Body of pancreas (tissue), 4 donors: ENCODE measurements at regions of chr1 and their contacts with region 1.

Region 1: DNA sequence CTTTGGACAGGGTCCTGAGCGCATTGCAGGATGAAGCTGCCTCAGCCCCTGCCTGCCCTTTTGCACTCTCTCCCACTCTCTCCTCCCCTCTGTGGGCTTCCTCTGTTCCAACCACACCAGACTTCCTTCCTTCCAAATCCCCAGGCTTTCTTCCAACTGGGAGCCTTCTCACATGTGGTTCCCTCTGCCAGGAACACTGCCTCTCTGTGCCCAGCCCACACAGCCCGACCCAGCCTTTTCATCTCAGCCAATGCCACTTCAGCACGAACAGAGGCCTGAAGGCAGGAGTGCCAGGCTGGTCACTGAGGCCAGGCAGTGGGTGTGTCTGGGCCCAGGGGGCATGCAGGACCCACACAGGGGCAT is 5.9 kb downstream of the SELENON start:
- DNase-seq: peak; percentile 66 to 82 (median 76)
- ATAC-seq: peak; percentile 78
- H3K4me3 ChIP-seq: no peak overlapping the region
- H3K27ac ChIP-seq: peak overlapping the region; percentile 71 to 83 (median 79)
- H3K4me1 ChIP-seq: peaks cover 75% of the 10 kb centered on the region
- H3K27me3 ChIP-seq: no peaks in the 10 kb centered on the region
- CTCF ChIP-seq: no peak
- POLR2A ChIP-seq: no peak

Region 2: DNA sequence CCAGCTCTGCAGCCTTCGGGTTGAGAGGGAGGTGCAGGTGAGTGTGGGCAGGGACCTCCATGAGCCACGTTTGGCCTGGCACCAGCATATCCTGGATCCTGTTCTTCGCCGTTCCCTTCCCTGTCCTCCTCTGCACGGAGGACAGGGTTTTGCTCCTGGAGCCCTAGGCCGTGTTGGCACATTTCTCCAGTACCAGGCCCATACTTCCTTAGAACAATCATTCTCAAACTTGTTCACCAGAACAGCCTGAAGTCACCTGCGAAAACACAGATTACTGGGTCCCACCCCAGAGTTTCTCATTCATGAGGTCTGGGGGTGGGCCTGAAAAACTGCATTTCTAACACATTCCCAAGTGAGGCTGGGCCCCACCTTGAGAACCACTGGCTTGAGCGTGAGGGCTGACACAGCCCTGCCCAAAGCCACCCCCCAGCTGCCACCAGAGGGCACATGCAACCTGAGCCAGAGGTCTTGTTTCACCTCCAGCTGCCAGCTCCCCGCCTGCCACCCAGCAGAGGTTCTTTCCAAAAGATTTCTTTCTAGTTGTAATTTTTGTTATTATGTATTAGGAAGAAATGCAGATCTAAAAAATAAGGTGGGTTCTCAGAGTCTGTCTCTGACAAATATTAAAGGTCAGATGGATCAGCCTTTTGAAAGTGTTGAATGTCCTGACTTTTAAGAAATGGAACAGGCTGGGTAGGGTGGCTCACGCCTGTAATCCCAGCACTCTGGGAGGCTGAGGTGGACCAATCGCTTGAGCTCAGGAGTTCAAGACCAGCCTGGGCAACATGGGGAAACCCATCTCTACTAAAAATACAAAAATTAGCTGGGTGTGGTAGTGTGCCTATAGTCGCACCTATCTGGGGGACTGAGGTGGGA is 302.1 kb before region 1 on chr1:
- intact Hi-C with region 1: loop called (anchors 5 kb)
- DNase-seq: peak; percentile 69 to 82 (median 75)
- ATAC-seq: peak; percentile 88
- H3K4me3 ChIP-seq: no peak overlapping the region
- H3K27ac ChIP-seq: no peak overlapping the region
- H3K4me1 ChIP-seq: no peaks in the 10 kb centered on the region
- H3K27me3 ChIP-seq: no peaks in the 10 kb centered on the region
- CTCF ChIP-seq: peak; percentile 28 to 72 (median 63)
- POLR2A ChIP-seq: no peak

Region 3: GRCh38 chr1:25610822-25611630 is 194.8 kb before region 1 on chr1:
- intact Hi-C with region 1: loop called (anchors 5 kb)
- DNase-seq: no peak
- ATAC-seq: no peak
- H3K4me3 ChIP-seq: no peak overlapping the region
- H3K27ac ChIP-seq: no peak overlapping the region
- H3K4me1 ChIP-seq: peaks cover 9% of the 10 kb centered on the region
- H3K27me3 ChIP-seq: no peaks in the 10 kb centered on the region
- CTCF ChIP-seq: peak in 1 of 7 experiments; percentile 23
- POLR2A ChIP-seq: no peak